ENCODE measurements at regions of chr5 and their contacts with region 1.

Region 1: GRCh38 chr5:34656001-34656699 is at the start of gene RAI14:
- DNase-seq: peak; percentile 81
- H3K27ac ChIP-seq: peak within 1 kb of the TSS; percentile 87
- CTCF ChIP-seq: peak; percentile 25

Region 2: GRCh38 chr5:34674187-34674586 is 18.0 kb after region 1 on chr5:
- CTCF ChIA-PET with region 1: interaction called, 11 read pairs
- POLR2A ChIA-PET with region 1: no interaction called
- DNase-seq: peak; percentile 59
- H3K27ac ChIP-seq: peak overlapping the region; percentile 43; the same call in 1 of the 2 replicates
- CTCF ChIP-seq: no peak

Region 3: GRCh38 chr5:34771064-34771463 is 114.9 kb after region 1 on chr5:
- CTCF ChIA-PET with region 1: no interaction called
- POLR2A ChIA-PET with region 1: no interaction called
- DNase-seq: no peak
- H3K27ac ChIP-seq: no peak overlapping the region
- CTCF ChIP-seq: no peak

Region 4: GRCh38 chr5:34898258-34898895 is 242.2 kb after region 1 on chr5:
- CTCF ChIA-PET with region 1: interaction called, 12 read pairs
- POLR2A ChIA-PET with region 1: no interaction called
- DNase-seq: peak; percentile 69
- H3K27ac ChIP-seq: no peak overlapping the region
- CTCF ChIP-seq: peak; percentile 94

Region 5: GRCh38 chr5:35230038-35230631 is 574.0 kb after region 1 on chr5 and contains the start of gene PRLR:
- CTCF ChIA-PET with region 1: no interaction called
- POLR2A ChIA-PET with region 1: no interaction called
- DNase-seq: peak; percentile 26
- H3K27ac ChIP-seq: no peak within 1 kb of the TSS
- CTCF ChIP-seq: no peak

Measured in RWPE1 (cell line).